ENCODE measurements at regions of chrX and their contacts with region 1.

Region 1: GRCh38 chrX:5876984-5877596 is 351.6 kb downstream of the NLGN4X start:
- DNase-seq: peak in 1 of 2 experiments; percentile 30
- H3K4me3 ChIP-seq: no peak overlapping the region
- H3K4me3 Mint-ChIP-seq: no peak overlapping the region
- H3K27ac Mint-ChIP-seq: no peak overlapping the region
- H3K4me1 ChIP-seq: no peaks in the 10 kb centered on the region
- H3K4me1 Mint-ChIP-seq: no peaks in the 10 kb centered on the region
- H3K27me3 ChIP-seq: no peaks in the 10 kb centered on the region
- H3K27me3 Mint-ChIP-seq: peaks cover 3% of the 10 kb centered on the region
- CTCF ChIP-seq: peak; percentile 42 to 46

Region 2: GRCh38 chrX:5458300-5458842 is 418.7 kb before region 1 on chrX:
- CTCF ChIA-PET with region 1: no interaction called
- POLR2A ChIA-PET with region 1: no interaction called
- intact Hi-C with region 1: loop called (anchors 5 kb)
- DNase-seq: peak in 1 of 2 experiments; percentile 8
- H3K4me3 ChIP-seq: no peak overlapping the region
- H3K4me3 Mint-ChIP-seq: no peak overlapping the region
- H3K27ac Mint-ChIP-seq: no peak overlapping the region
- H3K4me1 ChIP-seq: no peaks in the 10 kb centered on the region
- H3K4me1 Mint-ChIP-seq: no peaks in the 10 kb centered on the region
- H3K27me3 ChIP-seq: no peaks in the 10 kb centered on the region
- H3K27me3 Mint-ChIP-seq: no peaks in the 10 kb centered on the region
- CTCF ChIP-seq: peak in 1 of 2 experiments; percentile 46

Region 3: GRCh38 chrX:5681159-5681558 is 195.9 kb before region 1 on chrX:
- CTCF ChIA-PET with region 1: no interaction called
- POLR2A ChIA-PET with region 1: no interaction called
- intact Hi-C with region 1: loop called (anchors 1 kb)
- DNase-seq: no peak
- H3K4me3 ChIP-seq: no peak overlapping the region
- H3K4me3 Mint-ChIP-seq: no peak overlapping the region
- H3K27ac Mint-ChIP-seq: no peak overlapping the region
- H3K4me1 ChIP-seq: no peaks in the 10 kb centered on the region
- H3K4me1 Mint-ChIP-seq: no peaks in the 10 kb centered on the region
- H3K27me3 ChIP-seq: no peaks in the 10 kb centered on the region
- H3K27me3 Mint-ChIP-seq: no peaks in the 10 kb centered on the region
- CTCF ChIP-seq: no peak

Region 4: DNA sequence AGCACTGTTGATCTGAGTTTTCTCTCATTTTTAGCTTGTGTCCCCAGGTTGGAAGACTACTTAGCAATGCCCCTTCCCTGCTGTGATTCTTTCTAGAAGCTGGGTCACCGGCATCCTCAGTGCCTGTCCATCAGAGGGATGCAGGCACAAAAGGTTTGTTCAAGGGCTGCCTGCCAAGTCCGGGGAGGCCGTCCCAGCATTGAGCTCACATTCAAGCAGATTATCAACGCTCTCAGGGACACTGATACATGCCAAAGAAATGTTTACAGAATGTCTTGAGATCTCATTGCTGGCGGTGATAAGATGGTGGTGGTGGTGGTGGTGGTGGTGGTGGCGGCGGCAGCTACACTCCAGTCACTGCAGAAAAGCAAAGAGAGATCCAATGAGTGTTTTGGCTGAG is 737.4 kb after region 1 on chrX:
- CTCF ChIA-PET with region 1: no interaction called
- POLR2A ChIA-PET with region 1: no interaction called
- intact Hi-C with region 1: no loop called
- DNase-seq: no peak
- H3K4me3 ChIP-seq: no peak overlapping the region
- H3K4me3 Mint-ChIP-seq: no peak overlapping the region
- H3K27ac Mint-ChIP-seq: no peak overlapping the region
- H3K4me1 ChIP-seq: no peaks in the 10 kb centered on the region
- H3K4me1 Mint-ChIP-seq: no peaks in the 10 kb centered on the region
- H3K27me3 ChIP-seq: no peaks in the 10 kb centered on the region
- H3K27me3 Mint-ChIP-seq: no peaks in the 10 kb centered on the region
- CTCF ChIP-seq: no peak

Measured in Caco-2 (cell line).